Naive thymus-derived CD4-positive, alpha-beta T cell (primary cell): ENCODE measurements at regions of chr7 and their contacts with region 1.

Region 1: DNA sequence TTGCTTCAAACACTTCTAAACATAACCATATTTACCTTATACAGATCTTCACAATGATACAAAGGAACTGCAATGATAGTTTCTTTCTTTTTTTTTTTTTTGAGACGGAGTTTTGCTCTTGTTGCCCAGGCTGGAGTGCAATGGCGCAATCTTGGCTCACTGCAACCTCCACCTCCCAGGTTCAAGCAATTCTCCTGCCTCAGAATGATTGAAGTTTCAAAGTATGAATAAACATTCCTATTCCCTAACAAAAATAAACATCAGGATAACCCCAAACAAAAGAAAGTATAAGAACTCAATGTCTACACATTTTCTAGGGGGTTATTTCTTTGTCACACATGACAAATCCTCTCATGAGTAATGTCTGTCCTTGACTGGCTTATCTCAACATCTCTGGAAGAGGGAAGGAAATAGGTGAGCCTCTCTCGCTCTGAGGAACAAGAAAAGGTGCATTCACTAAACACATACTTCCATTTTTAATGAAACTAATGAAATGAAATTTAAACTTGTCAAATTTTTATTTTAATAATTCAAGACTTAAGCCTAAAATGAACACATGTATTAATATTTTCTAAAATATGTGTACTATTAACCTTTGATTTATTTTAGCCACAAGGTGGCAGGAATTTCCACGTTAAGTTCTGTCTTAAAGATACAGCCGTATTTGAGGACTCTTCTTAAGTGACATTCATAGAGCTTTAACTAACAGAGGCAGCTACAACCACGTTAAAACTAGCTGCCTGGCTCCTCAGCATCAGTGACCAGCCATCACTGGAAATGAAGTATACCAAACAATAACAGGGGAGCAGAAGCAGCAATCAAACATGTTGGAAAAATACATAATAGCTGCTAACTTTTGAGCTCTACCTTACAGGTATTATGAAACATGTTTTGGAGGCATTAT is 58.3 kb downstream of the MALSU1 start:
- DNase-seq: peak in 4 of 9 donors; percentile 17 to 37 (median 22)
- ATAC-seq: peak; percentile 55
- H3K4me3 ChIP-seq: no peak overlapping the region
- H3K4me3 Mint-ChIP-seq: peak overlapping the region in 2 of 10 donors; percentile 3 to 51
- H3K27ac ChIP-seq: no peak overlapping the region
- H3K27ac Mint-ChIP-seq: no peak overlapping the region
- H3K4me1 ChIP-seq: peaks cover 5 to 6% of the 10 kb centered on the region in 2 donors
- H3K4me1 Mint-ChIP-seq: peaks cover 5 to 19% (median 14%) of the 10 kb centered on the region in 7 donors
- H3K27me3 ChIP-seq: no peaks in the 10 kb centered on the region
- H3K27me3 Mint-ChIP-seq: peaks cover 0 to 47% (median 12%) of the 10 kb centered on the region in 5 donors

Region 2: DNA sequence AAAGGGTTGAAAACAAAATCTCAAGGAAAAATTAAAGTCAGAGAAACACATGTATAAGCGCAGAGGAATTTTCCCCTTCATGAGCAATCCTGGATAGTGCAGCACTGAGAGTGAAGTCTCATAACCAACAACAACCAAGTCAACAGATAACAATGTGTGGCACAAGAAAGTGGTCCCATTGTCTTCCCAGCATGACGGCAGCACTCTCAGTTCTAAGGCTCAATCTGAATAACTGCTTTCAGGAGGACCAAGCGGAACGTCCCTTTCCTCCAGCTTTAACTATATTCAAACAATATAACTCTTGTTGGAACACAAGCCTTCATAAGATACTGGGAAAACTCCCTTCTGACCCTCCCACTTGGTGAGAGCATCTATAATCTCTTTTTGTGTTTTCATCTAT is 1138.4 kb before region 1 on chr7:
- CTCF ChIA-PET with region 1: no interaction called
- POLR2A ChIA-PET with region 1: no interaction called
- intact Hi-C with region 1: no loop called
- DNase-seq: no peak
- ATAC-seq: no peak
- H3K4me3 ChIP-seq: no peak overlapping the region
- H3K4me3 Mint-ChIP-seq: no peak overlapping the region
- H3K27ac ChIP-seq: no peak overlapping the region
- H3K27ac Mint-ChIP-seq: no peak overlapping the region
- H3K4me1 ChIP-seq: no peaks in the 10 kb centered on the region
- H3K4me1 Mint-ChIP-seq: no peaks in the 10 kb centered on the region
- H3K27me3 ChIP-seq: no peaks in the 10 kb centered on the region
- H3K27me3 Mint-ChIP-seq: peaks cover 17 to 33% (median 22%) of the 10 kb centered on the region in 5 donors

Region 3: DNA sequence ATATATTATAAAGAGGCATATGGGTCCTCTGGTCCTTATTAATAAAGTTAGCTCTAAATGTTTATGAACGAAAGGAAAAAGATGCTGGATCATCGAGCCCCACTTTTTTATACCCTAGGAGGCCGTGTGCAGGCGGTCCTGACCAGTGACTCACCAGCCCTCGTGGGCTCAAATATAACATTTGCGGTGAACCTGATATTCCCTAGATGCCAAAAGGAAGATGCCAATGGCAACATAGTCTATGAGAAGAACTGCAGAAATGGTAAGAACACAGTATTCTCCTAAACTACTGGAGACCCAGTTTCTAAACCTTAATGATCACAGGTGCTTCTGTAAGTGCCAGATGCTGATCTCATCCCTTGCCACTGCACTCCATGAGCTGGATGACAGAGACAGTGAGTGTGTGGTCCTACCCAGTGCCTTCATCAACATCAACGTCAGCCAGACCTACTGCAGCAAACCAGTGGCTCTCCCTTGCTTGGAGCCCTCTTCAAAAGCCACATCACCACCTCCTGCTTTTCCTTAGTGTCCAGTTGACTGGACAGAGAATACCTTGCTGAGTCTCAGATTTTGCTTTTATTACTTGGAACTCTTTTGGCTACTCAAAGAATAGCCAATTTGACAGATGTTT is 103.3 kb before region 1 on chr7:
- CTCF ChIA-PET with region 1: no interaction called
- POLR2A ChIA-PET with region 1: no interaction called
- intact Hi-C with region 1: no loop called
- DNase-seq: no peak
- ATAC-seq: no peak
- H3K4me3 ChIP-seq: no peak overlapping the region
- H3K4me3 Mint-ChIP-seq: no peak overlapping the region
- H3K27ac ChIP-seq: no peak overlapping the region
- H3K27ac Mint-ChIP-seq: no peak overlapping the region
- H3K4me1 ChIP-seq: no peaks in the 10 kb centered on the region
- H3K4me1 Mint-ChIP-seq: no peaks in the 10 kb centered on the region
- H3K27me3 ChIP-seq: peaks cover 0 to 5% of the 10 kb centered on the region in 2 donors
- H3K27me3 Mint-ChIP-seq: peaks cover 40 to 63% (median 51%) of the 10 kb centered on the region in 5 donors

Region 4: DNA sequence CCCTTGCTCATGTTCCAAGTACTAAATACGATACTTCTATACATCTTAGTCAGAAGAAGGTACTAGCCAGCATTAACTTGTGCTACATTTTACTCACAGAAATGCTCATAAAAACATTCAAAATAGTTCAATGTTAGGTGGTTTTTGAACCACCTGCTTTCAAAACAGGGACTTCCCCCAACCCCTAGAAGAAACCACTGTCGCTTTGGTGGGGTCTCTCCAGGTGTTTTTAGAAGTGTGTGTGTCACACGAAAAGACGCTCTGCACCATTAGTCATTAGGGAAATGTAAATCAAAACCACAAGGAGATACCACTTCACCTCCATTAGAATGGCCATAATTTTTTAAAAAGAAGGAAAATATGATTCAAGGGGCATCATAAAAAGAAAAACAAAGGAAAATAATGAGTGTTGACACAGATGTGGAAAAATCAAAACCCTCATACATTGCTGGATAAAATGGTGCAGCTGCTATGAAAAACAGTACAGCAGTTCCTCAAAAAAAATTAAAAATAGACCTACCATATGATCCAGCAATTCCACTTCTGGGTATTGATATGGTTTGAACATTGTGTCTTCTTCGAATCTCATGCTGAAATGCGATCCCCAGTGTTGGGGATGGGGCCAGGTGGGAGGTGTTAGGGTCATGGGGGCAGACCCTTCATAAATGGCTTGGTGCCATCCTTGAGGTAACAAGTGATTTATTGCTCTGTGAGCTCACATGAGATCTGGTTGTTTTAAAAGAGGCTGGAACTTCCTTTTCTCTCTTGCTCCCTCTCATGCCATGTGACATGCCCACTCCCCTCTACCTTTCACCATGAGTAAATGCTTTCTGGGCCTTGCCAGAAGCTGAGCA is 15.9 kb after region 1 on chr7:
- CTCF ChIA-PET with region 1: interaction called, 4 read pairs
- POLR2A ChIA-PET with region 1: no interaction called
- intact Hi-C with region 1: loop called in 1 of 2 experiments (anchors 1 kb)
- DNase-seq: peak in 3 of 9 donors; percentile 32 to 63 (median 34)
- ATAC-seq: peak; percentile 76
- H3K4me3 ChIP-seq: no peak overlapping the region
- H3K4me3 Mint-ChIP-seq: peak overlapping the region in 4 of 10 donors; percentile 3 to 53 (median 30)
- H3K27ac ChIP-seq: no peak overlapping the region
- H3K27ac Mint-ChIP-seq: peak overlapping the region in 3 of 9 donors; percentile 7 to 39 (median 36)
- H3K4me1 ChIP-seq: peaks cover 0 to 8% of the 10 kb centered on the region in 2 donors
- H3K4me1 Mint-ChIP-seq: peaks cover 3 to 41% (median 16%) of the 10 kb centered on the region in 7 donors
- H3K27me3 ChIP-seq: no peaks in the 10 kb centered on the region
- H3K27me3 Mint-ChIP-seq: peaks cover 0 to 21% (median 0%) of the 10 kb centered on the region in 5 donors

Region 5: DNA sequence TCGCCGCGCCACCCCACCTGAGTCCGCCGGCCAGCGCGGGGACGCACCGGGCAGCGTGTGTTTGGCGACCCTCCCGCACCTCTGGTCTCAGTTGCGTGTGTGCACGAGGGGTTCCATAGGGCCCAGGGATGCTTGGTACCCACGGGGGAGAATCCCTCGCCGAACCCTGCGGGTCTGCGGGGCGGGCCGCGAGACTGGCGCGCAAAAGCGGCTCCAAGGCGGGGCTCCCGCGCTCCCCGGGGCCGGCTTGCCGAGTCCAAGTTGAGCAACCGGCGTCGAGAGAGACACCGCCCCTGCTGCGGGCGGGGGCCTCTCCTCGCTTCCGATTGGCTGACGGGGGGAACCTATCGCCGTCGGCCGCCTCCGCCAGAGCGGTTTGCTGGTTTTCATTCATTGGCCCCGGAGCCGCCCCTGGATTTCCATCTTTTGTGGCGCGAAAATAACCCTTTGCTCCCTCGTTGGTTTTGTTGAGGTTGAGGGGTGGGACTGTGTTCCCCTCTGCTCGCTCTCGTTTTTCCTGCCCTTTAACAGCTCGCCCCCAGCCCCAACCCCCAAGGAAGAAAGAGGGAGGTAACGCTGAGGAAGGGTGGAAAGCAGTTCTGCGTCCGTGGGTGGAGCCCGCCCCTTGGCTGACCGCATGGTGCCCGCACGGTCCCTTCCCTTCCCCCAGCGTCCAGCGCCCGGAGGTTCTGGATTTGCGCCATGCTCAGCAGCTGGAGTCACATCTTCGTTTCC is 116.8 kb after region 1 on chr7:
- CTCF ChIA-PET with region 1: no interaction called
- POLR2A ChIA-PET with region 1: no interaction called
- intact Hi-C with region 1: loop called in 1 of 2 experiments (anchors 2 kb)
- DNase-seq: peak in 6 of 9 donors; percentile 13 to 90 (median 26)
- ATAC-seq: peak; percentile 80
- H3K4me3 ChIP-seq: no peak overlapping the region
- H3K4me3 Mint-ChIP-seq: peak overlapping the region; percentile 13 to 85 (median 54)
- H3K27ac ChIP-seq: no peak overlapping the region
- H3K27ac Mint-ChIP-seq: peak overlapping the region in 5 of 9 donors; percentile 21 to 70 (median 69)
- H3K4me1 ChIP-seq: peaks cover 12 to 22% of the 10 kb centered on the region in 2 donors
- H3K4me1 Mint-ChIP-seq: peaks cover 17 to 35% (median 29%) of the 10 kb centered on the region in 7 donors
- H3K27me3 ChIP-seq: peaks cover 78 to 85% of the 10 kb centered on the region in 2 donors
- H3K27me3 Mint-ChIP-seq: peaks cover 67 to 75% (median 70%) of the 10 kb centered on the region in 5 donors

Region 6: GRCh38 chr7:23520582-23520981 is 163.1 kb after region 1 on chr7:
- CTCF ChIA-PET with region 1: no interaction called
- POLR2A ChIA-PET with region 1: no interaction called
- intact Hi-C with region 1: loop called in 1 of 2 experiments (anchors 5 kb)
- DNase-seq: no peak
- ATAC-seq: no peak
- H3K4me3 ChIP-seq: no peak overlapping the region
- H3K4me3 Mint-ChIP-seq: no peak overlapping the region
- H3K27ac ChIP-seq: no peak overlapping the region
- H3K27ac Mint-ChIP-seq: peak overlapping the region in 1 of 9 donors; percentile 8
- H3K4me1 ChIP-seq: peaks cover 7 to 27% of the 10 kb centered on the region in 2 donors
- H3K4me1 Mint-ChIP-seq: peaks cover 30 to 50% (median 41%) of the 10 kb centered on the region in 7 donors
- H3K27me3 ChIP-seq: no peaks in the 10 kb centered on the region
- H3K27me3 Mint-ChIP-seq: no peaks in the 10 kb centered on the region

Region 7: GRCh38 chr7:23546897-23547572 is 189.6 kb after region 1 on chr7:
- CTCF ChIA-PET with region 1: no interaction called
- POLR2A ChIA-PET with region 1: no interaction called
- intact Hi-C with region 1: loop called (anchors 1 to 2 kb)
- DNase-seq: peak; percentile 37 to 89 (median 82)
- ATAC-seq: peak; percentile 98
- H3K4me3 ChIP-seq: no peak overlapping the region
- H3K4me3 Mint-ChIP-seq: no peak overlapping the region
- H3K27ac ChIP-seq: no peak overlapping the region
- H3K27ac Mint-ChIP-seq: peak overlapping the region in 6 of 9 donors; percentile 22 to 90 (median 40)
- H3K4me1 ChIP-seq: no peaks in the 10 kb centered on the region
- H3K4me1 Mint-ChIP-seq: peaks cover 0 to 14% (median 5%) of the 10 kb centered on the region in 7 donors
- H3K27me3 ChIP-seq: no peaks in the 10 kb centered on the region
- H3K27me3 Mint-ChIP-seq: peaks cover 0 to 5% (median 0%) of the 10 kb centered on the region in 5 donors

Region 8: DNA sequence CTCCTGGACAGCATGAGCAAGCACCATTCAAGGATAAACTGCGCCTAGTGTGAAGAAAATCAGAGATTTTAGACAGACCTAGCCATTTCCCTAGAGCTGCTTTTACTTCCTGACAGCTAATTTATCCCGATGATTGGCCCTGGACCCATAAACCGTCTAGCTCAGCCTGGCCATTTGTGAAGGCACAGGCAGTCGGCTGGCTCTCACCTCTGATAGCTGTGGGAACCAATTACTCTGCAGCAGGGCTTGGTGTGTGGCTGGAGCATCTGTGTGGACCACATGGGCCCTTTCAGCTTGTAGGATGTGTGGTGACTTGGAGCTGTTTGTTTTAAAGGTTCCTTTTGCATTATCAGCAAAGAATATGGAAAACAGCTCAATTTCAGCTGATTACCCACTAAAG is 815.4 kb after region 1 on chr7:
- CTCF ChIA-PET with region 1: no interaction called
- POLR2A ChIA-PET with region 1: no interaction called
- intact Hi-C with region 1: no loop called
- DNase-seq: no peak
- ATAC-seq: no peak
- H3K4me3 ChIP-seq: no peak overlapping the region
- H3K4me3 Mint-ChIP-seq: no peak overlapping the region
- H3K27ac ChIP-seq: no peak overlapping the region
- H3K27ac Mint-ChIP-seq: no peak overlapping the region
- H3K4me1 ChIP-seq: no peaks in the 10 kb centered on the region
- H3K4me1 Mint-ChIP-seq: no peaks in the 10 kb centered on the region
- H3K27me3 ChIP-seq: no peaks in the 10 kb centered on the region
- H3K27me3 Mint-ChIP-seq: peaks cover 0 to 6% (median 2%) of the 10 kb centered on the region in 5 donors

Region 9: GRCh38 chr7:24356718-24357386 is 999.4 kb after region 1 on chr7:
- CTCF ChIA-PET with region 1: no interaction called
- POLR2A ChIA-PET with region 1: no interaction called
- intact Hi-C with region 1: no loop called
- DNase-seq: no peak
- ATAC-seq: no peak
- H3K4me3 ChIP-seq: no peak overlapping the region
- H3K4me3 Mint-ChIP-seq: no peak overlapping the region
- H3K27ac ChIP-seq: no peak overlapping the region
- H3K27ac Mint-ChIP-seq: no peak overlapping the region
- H3K4me1 ChIP-seq: no peaks in the 10 kb centered on the region
- H3K4me1 Mint-ChIP-seq: peaks cover 0 to 4% (median 0%) of the 10 kb centered on the region in 7 donors
- H3K27me3 ChIP-seq: no peaks in the 10 kb centered on the region
- H3K27me3 Mint-ChIP-seq: peaks cover 4 to 20% (median 7%) of the 10 kb centered on the region in 5 donors